ACHN (cell line): ENCODE measurements at regions of chr9 and their contacts with region 1.

Region 1: DNA sequence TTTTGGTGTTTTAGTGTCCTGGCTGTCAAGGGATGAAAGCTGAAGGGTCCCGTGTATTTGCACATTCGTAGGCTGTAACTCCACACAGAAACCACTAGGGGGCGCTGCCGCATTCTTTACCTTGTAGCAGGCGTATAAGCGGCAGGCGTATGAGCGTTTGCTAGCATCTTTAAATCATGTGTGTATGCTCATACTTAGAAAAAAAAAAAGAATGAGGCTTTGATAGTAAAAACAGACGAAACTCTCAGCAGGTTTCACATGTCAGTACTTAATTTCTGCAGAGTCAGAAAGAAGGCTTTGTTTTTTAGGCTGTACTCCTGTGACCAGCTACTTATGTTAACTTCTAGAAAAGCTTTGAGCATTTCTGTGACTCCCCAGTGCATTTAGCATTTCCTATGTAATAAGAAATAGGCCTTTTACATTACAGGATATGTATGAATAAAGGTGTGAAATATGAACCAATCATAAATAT is 218.8 kb upstream of the ADAMTSL1 start:
- DNase-seq: peak; percentile 68

Region 2: GRCh38 chr9:18032636-18033035 is 222.6 kb before region 1 on chr9:
- in situ Hi-C with region 1: no loop called
- DNase-seq: no peak

Region 3: DNA sequence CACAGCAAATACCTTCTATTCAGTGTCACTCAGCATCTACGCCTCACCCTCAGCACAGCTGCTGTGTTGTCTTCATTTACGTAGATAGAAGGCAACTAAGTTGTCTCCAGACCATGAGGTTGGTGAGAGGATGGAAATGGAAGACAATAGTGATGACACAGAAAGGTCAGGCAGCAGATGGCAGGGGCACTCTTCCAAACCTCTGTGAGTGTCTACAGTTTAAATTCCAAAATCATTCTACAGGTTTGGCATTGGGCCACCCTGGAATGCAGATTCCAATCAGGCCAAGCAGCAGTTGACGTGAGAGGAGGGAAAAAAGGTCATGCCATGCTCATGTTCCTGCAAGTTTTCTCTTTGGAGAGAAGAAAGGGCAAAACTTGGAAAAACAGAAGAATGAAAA is 150.0 kb after region 1 on chr9:
- in situ Hi-C with region 1: loop called (anchors 25 kb)
- DNase-seq: no peak